Common myeloid progenitor, CD34-positive (primary cell): ENCODE measurements at regions of chr3 and their contacts with region 1.

Region 1: GRCh38 chr3:5026331-5027218 is 47.3 kb downstream of the BHLHE40 start:
- DNase-seq: peak; percentile 84 to 89 (median 86)
- H3K4me3 ChIP-seq: peak overlapping the region; percentile 13 to 78 (median 45)
- H3K27ac ChIP-seq: no peak overlapping the region
- H3K4me1 ChIP-seq: peaks cover 0 to 16% (median 13%) of the 10 kb centered on the region in 4 experiments
- H3K27me3 ChIP-seq: no peaks in the 10 kb centered on the region

Region 2: DNA sequence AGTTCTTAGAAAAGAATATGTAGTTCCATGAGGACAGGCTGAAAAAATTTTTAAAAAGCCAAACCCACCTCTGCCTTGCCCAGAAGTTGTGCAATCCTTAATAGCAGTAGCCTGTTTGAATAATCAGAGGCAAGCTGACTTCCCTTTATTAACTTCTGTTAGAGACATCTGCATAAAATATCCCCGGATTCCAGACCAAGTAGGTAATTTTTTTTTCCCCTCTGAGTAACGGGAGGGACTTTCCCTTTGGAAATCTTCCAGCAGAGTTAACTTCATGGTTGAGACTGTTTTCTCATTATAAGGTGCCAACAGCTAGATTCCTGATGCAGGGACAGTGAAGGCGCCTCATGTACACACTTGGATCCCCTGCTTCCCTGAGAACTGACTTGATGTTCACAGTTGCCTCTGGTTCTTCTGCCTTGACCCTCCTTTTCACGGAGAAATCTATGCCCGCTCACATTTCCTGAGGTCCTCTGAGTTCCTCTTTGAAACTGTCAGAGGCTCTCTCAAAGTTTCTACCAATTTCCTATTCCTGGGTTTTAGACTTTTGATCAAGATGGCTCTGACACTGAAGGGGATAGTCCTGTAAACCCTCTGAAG is 275.0 kb before region 1 on chr3:
- CTCF ChIA-PET with region 1: no interaction called
- POLR2A ChIA-PET with region 1: no interaction called
- DNase-seq: peak in 2 of 3 donors; percentile 86
- H3K4me3 ChIP-seq: peak overlapping the region in 6 of 7 experiments; percentile 15 to 54 (median 34)
- H3K27ac ChIP-seq: peak overlapping the region; percentile 61 to 77
- H3K4me1 ChIP-seq: peaks cover 33 to 80% (median 57%) of the 10 kb centered on the region in 4 experiments
- H3K27me3 ChIP-seq: no peaks in the 10 kb centered on the region

Region 3: DNA sequence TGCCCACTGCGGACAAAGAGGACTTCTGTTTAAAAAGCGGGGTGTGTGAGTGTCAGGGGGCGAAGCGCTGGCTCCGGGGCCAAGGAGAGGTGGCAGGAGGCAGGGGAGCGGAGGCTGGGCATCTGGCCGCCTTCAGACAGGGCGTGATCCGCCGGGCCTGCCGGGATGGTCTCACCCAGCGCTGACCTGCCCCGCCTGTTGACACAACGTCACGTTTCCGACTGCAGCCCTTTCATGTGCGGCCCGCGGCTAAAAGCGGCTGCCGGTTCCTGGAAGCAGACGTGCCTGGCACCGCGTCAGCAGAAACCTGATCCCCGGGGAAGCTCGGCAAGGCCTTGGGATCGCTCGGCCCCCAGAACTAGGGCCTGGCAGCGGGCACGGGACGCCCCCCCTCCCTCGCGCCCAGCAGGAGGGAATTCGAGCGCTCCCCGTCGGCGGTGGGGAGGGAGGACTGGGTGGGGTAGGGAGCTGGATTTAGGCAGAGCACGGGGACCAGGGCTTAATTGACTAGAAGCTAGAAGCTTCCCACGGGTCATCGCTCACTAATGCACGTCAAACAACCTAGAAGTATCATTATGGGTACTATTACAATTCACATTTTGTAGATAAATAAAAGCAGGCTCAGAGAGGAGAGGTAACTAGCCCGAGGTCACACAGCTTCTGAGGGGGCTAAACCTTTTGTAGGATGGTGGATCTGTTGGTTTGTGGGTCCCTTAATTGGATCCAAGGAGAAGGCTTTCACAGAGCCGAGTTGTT is 39.6 kb before region 1 on chr3:
- CTCF ChIA-PET with region 1: interaction called, 80 read pairs
- POLR2A ChIA-PET with region 1: interaction called, 7 read pairs
- DNase-seq: peak; percentile 56 to 71 (median 58)
- H3K4me3 ChIP-seq: peak overlapping the region; percentile 38 to 80 (median 63)
- H3K27ac ChIP-seq: peak overlapping the region in 1 of 2 experiments; percentile 88
- H3K4me1 ChIP-seq: peaks cover 13 to 71% (median 52%) of the 10 kb centered on the region in 4 experiments
- H3K27me3 ChIP-seq: no peaks in the 10 kb centered on the region

Region 4: DNA sequence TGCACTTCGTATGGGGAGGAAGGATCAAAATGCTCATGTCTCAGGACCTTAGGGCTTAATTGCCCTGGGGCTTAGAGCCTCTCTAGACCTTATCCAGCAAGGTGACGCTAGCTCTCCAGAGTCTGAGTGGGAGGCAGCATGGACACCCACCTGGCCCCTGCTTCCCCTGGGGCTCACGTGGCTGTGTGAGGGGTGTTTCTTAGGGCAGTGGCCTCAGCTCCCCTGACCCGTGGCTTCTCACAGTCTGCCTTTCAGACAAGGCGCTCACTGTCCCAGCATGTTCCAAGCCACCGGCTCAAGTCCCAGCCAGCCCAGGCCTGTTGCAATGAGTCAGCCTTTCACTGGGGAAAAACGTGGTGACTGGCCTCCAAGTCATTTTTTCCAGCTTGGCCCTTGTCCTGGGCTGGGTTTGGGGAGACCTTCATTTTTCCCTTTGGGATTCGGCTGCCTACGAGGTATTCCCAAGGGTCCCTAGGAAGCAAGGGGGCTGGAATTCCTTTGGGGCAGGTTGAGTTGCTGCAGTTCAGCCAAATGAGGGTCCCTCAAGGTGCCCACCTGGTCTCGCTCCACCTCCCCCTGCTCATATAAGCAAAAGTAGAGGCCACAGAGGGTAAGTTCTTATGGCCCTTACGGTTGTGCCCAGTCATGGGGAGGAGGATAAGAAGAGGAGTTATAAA is 31.6 kb before region 1 on chr3:
- CTCF ChIA-PET with region 1: interaction called, 13 read pairs
- POLR2A ChIA-PET with region 1: no interaction called
- DNase-seq: no peak
- H3K4me3 ChIP-seq: no peak overlapping the region
- H3K27ac ChIP-seq: peak overlapping the region in 1 of 2 experiments; percentile 62
- H3K4me1 ChIP-seq: peaks cover 0 to 26% (median 6%) of the 10 kb centered on the region in 4 experiments
- H3K27me3 ChIP-seq: no peaks in the 10 kb centered on the region

Region 5: DNA sequence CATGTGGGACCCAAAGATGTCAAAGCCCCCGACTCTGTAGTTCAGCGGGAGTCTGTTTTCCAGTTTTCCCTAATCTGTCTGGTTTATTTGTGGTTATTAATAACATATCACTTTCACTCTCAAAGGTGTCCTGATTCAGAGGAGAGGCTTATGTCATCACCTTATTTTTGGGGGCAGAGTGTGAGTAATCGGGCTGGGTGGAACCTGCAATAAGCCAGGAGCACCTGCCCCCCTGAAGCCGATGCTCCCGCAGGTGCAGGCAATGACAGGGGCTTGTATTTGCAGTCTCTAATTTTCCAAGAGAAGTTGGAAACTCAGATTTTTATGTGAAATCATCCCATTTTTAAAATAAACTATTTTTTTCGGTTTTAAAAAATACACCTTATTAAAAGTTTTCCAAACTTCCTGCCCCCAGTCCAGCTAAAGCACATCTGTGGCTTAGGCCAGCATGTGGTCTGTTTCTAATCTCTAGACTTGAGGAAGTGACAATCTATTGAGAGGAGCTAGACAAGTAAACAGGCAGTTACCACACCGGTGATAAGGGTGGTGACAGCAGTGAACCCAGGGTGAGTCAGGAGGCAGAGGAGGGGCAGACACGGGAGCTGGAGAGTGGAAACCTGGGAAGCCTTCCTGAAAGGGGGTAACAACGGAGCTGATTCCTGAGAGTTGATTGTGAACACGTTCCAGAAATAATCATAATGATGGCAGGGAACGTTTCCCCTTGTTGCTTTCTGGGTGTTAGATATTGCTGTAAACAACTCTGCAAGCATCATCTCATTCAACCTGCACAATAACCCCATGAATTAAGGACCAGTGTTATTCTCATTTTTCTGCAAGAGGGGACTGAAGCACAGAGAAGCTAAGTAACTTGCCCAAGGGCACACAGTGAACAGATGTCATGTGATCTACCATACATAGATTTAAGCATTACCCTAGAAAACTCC is 10.1 kb before region 1 on chr3:
- CTCF ChIA-PET with region 1: interaction called, 39 read pairs
- POLR2A ChIA-PET with region 1: interaction called, 9 read pairs
- DNase-seq: peak; percentile 60 to 89 (median 78)
- H3K4me3 ChIP-seq: peak overlapping the region in 3 of 7 experiments; percentile 19 to 39 (median 34)
- H3K27ac ChIP-seq: peak overlapping the region in 1 of 2 experiments; percentile 7
- H3K4me1 ChIP-seq: peaks cover 31 to 88% (median 76%) of the 10 kb centered on the region in 4 experiments
- H3K27me3 ChIP-seq: no peaks in the 10 kb centered on the region

Region 6: GRCh38 chr3:5041315-5041714 is 14.7 kb after region 1 on chr3:
- CTCF ChIA-PET with region 1: interaction called, 22 read pairs
- POLR2A ChIA-PET with region 1: no interaction called
- DNase-seq: no peak
- H3K4me3 ChIP-seq: no peak overlapping the region
- H3K27ac ChIP-seq: no peak overlapping the region
- H3K4me1 ChIP-seq: peaks cover 3 to 23% (median 15%) of the 10 kb centered on the region in 4 experiments
- H3K27me3 ChIP-seq: no peaks in the 10 kb centered on the region

Region 7: GRCh38 chr3:5057857-5058324 is 31.3 kb after region 1 on chr3:
- CTCF ChIA-PET with region 1: interaction called, 12 read pairs
- POLR2A ChIA-PET with region 1: no interaction called
- DNase-seq: peak; percentile 86 to 94 (median 91)
- H3K4me3 ChIP-seq: no peak overlapping the region
- H3K27ac ChIP-seq: no peak overlapping the region
- H3K4me1 ChIP-seq: peaks cover 10 to 50% (median 26%) of the 10 kb centered on the region in 4 experiments
- H3K27me3 ChIP-seq: no peaks in the 10 kb centered on the region